ENCODE measurements at regions of chr16 and their contacts with region 1.

Region 1: DNA sequence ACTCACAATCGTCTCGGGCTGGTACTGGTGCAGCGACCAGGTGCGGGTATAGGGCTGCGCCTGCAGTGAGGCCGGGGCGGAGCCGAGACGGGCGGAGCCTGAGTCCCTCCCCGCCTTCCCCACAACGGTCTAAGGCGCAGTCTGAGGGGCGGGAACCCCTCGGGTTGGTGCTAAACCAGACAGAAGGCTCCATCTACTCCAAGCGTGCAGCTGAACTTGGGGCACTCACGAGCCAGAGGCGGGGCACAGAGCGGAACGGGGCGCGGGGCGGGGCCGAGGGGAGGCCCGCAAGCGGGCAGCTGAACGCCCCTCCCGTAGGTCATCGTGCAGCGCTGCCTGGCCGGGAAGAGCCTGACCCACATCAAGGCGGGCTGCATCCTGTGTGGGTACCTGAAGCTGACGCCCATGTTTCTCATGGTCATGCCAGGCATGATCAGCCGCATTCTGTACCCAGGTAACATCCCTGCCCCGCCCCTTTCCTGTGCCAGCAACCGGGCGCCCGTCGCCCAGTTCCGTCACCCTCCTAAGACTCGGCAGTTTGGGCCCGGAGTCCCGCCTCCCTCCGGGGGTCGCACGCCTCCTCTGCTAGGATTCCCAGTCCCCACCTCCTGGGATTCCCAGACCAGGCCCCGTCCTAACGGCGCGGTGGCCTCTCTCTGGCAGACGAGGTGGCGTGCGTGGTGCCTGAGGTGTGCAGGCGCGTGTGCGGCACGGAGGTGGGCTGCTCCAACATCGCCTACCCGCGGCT is 5.0 kb downstream of the SLC5A2 start:
- DNase-seq: no peak
- H3K4me3 ChIP-seq: peak overlapping the region; percentile 55
- CTCF ChIP-seq: no peak

Region 2: DNA sequence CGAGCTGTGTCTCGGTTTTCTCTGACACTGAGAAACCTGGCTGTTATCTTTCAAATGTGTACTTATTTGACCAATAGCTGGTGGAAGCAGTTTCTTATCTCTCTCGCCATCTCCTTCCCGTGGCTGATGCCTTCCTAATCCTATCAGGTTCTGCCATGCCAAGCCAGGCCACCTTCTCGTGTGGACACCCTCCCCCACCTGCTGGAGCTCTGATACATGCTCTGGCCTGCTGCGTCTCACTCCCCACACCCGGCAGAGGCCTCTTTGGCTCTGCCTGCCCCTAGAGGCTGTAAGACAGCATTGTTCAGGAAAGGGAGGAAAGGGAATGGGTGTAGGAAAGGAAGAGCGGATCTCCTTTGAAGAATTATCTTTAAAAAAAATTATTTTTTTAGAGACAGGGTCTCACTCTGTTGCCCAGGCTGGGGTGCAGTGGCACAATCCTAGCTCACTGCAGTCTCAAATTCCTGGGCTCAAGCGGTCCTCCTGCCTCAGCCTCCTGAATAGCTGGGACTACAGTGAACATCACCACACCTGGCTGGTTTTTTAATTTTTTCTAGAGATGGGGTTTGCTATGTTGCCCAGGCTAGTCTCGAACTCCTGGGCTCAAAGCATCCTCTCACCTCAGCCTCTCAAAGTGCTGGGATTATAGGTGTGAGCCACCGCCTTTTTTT is 36.1 kb before region 1 on chr16:
- CTCF ChIA-PET with region 1: no interaction called
- POLR2A ChIA-PET with region 1: no interaction called
- DNase-seq: no peak
- H3K4me3 ChIP-seq: no peak overlapping the region
- CTCF ChIP-seq: peak; percentile 87

Region 3: GRCh38 chr16:31472709-31473203 is 15.1 kb before region 1 on chr16:
- CTCF ChIA-PET with region 1: interaction called, 11 read pairs
- POLR2A ChIA-PET with region 1: interaction called, 8 read pairs
- DNase-seq: peak; percentile 46
- H3K4me3 ChIP-seq: peak overlapping the region; percentile 89
- CTCF ChIP-seq: peak; percentile 65